Activated T-helper 1 cell treated with anti-CD3 and anti-CD28 coated beads, Interleukin-12 subunit alpha, Interleukin-12 subunit beta, Interleukin-2, Interleukin-4 antibody, amounts not matched to agents 30 ng/mL and 10 ng/mL and 1 ng/mL, durations not matched to agents 14 hours and 24 hours and 36 hours (primary cell): ENCODE measurements at regions of chr16 and their contacts with region 1.

Region 1: GRCh38 chr16:3400779-3401688 is at the starts of genes ZNF174 and ZSCAN32:
- DNase-seq: peak; percentile 99
- H3K4me3 Mint-ChIP-seq: peak within 1 kb of the TSS; percentile 96
- H3K27ac Mint-ChIP-seq: peak within 1 kb of the TSS; percentile 81
- H3K4me1 Mint-ChIP-seq: peaks cover 7% of the 10 kb centered on the region
- H3K27me3 Mint-ChIP-seq: no peaks in the 10 kb centered on the region
- total RNA-seq, gene ZNF174: 9.9 and 10.6 TPM in 2 replicates
- total RNA-seq, gene ZSCAN32: 14.3 and 19.4 TPM in 2 replicates

Region 2: DNA sequence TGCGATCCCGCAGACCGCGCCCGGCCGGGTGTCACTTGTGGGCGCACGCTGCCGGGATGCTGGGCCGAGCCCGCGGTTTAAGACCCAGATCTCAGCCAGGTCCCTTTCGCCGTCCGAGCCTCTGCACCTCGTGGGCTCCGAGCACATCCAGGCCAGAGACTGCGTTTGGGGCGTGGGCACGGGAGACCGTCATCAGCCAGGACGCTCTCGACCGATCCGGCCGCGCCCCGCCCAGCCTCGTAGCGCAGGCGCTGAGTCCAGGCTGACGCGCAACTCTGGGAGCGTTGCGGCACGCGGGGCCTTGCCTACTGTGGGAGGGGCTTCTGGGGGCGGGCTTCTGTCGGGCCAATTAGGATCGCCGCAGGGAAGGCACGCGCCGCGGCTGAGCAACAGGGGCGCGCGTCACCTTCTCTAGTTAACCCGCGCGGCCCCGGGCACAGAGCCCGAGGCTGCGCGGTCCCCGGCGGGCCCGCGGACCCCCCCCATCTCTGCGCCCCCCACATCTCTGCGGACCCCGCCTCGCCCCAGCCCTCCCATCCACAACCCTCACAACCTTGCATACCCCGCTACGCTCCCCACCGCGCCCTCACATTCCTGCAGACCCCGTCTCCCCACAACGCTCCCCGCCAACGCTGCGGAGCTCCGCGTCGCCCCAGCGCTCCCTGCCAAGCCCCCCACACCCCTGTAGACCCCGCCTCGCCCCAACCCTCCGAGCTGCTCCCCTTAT is 869.1 kb before region 1 on chr16:
- intact Hi-C with region 1: loop called (anchors 10 kb)
- DNase-seq: peak; percentile 97
- H3K4me3 Mint-ChIP-seq: peak overlapping the region; percentile 100
- H3K27ac Mint-ChIP-seq: peak overlapping the region; percentile 100
- H3K4me1 Mint-ChIP-seq: peaks cover 9% of the 10 kb centered on the region
- H3K27me3 Mint-ChIP-seq: no peaks in the 10 kb centered on the region

Region 3: DNA sequence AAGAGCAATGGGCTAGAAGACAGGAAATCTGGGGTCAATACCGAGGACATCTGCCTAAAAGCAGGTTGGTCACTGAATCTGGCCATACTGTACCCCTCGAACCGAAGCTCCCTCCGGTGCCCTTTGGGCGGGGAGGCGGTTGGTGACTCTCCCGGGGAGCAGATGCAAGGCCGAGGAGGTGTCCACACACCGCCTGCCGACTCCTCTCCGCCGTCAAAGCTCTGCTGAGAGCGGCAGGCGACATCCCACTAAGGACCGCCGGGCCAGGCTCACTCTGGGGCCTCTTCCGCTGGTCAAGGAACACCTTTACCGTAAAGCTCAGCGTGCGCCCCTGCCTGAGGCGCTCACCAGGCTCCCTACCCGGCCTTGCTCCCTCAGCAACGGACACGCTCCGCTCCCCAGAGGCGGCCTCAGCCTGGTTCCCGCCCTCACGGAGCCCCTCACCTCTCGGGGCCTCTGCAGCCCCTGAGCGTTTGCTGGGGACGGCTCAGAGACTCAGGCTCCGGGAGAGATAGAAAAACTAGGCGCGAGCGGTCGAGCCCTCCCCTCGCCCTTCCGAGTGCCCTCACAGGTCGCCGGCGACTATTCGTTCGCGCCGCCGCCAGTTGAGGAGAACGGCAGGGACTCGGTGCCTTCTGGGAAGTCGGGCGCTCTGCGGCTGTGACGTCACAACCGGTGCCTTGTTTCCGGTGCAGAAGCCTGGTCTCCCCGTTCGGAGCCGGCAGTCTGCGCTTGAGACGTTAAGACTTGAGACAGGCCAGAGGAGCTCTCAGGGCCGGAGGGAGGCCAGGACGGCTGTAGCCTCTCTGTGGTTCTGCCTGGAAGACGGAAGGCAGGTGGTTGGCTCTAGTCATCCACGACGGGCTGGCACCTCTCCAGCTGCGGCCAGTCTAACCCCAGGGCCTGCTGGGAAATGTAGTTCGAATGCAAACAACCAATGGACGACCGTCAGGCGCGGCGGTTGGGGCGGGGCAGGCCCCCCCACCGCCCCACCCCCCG is 166.2 kb before region 1 on chr16 and contains the start of gene ZNF200:
- intact Hi-C with region 1: loop called (anchors 1 kb)
- DNase-seq: peak; percentile 91
- H3K4me3 Mint-ChIP-seq: peak within 1 kb of the TSS; percentile 94
- H3K27ac Mint-ChIP-seq: peak within 1 kb of the TSS; percentile 94
- H3K4me1 Mint-ChIP-seq: peaks cover 15% of the 10 kb centered on the region
- H3K27me3 Mint-ChIP-seq: no peaks in the 10 kb centered on the region
- total RNA-seq, gene ZNF200: 13.6 and 15.8 TPM in 2 replicates

Region 4: DNA sequence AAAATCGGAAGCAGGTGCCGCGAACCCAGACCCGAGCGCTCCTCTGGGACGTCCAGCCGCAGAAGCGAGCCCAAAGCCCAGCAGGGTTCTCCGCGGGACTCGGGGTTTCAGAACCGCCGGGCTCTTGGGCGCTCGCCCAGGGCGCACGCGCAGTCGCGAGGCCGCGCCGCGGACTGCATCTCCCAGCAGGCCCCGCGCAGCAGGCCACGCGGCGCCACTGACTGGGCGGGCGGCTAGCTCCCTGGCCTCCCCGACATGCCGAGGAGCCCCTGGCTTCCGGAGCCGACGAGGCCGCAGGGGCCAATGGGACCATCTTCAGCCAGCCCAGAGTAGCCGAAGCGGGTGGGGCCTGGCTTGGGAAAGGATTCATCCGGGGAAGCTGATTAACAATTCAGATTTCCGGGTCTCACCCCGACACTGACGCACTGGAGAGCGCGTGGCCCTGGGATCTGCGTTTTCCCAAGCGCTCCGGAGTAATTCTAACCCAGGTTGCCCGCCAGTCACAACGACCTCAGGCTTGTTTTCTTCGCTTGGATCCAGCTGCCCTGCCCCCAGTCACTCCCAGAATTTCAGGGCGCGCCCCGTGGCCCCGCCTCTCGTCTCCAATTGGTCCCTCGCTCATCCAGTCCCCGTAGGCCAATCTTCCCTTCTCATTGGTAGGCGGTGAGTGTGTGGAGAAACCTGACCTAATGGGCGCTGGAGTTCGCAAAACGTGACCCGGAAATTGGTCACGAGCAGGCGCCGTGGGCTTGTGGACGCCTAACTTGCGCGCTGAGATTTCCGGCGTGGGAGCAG is 118.1 kb before region 1 on chr16 and contains the start of gene ZNF263:
- intact Hi-C with region 1: loop called (anchors 1 kb)
- DNase-seq: peak; percentile 90
- H3K4me3 Mint-ChIP-seq: peak within 1 kb of the TSS; percentile 96
- H3K27ac Mint-ChIP-seq: peak within 1 kb of the TSS; percentile 97
- H3K4me1 Mint-ChIP-seq: peaks cover 23% of the 10 kb centered on the region
- H3K27me3 Mint-ChIP-seq: no peaks in the 10 kb centered on the region
- total RNA-seq, gene ZNF263: 25.5 and 27.8 TPM in 2 replicates

Region 5: GRCh38 chr16:3364774-3365427 is 36.1 kb before region 1 on chr16:
- intact Hi-C with region 1: loop called (anchors 2 kb)
- DNase-seq: peak; percentile 63
- H3K4me3 Mint-ChIP-seq: peak overlapping the region; percentile 68
- H3K27ac Mint-ChIP-seq: peak overlapping the region; percentile 53
- H3K4me1 Mint-ChIP-seq: no peaks in the 10 kb centered on the region
- H3K27me3 Mint-ChIP-seq: peaks cover 2% of the 10 kb centered on the region

Region 6: DNA sequence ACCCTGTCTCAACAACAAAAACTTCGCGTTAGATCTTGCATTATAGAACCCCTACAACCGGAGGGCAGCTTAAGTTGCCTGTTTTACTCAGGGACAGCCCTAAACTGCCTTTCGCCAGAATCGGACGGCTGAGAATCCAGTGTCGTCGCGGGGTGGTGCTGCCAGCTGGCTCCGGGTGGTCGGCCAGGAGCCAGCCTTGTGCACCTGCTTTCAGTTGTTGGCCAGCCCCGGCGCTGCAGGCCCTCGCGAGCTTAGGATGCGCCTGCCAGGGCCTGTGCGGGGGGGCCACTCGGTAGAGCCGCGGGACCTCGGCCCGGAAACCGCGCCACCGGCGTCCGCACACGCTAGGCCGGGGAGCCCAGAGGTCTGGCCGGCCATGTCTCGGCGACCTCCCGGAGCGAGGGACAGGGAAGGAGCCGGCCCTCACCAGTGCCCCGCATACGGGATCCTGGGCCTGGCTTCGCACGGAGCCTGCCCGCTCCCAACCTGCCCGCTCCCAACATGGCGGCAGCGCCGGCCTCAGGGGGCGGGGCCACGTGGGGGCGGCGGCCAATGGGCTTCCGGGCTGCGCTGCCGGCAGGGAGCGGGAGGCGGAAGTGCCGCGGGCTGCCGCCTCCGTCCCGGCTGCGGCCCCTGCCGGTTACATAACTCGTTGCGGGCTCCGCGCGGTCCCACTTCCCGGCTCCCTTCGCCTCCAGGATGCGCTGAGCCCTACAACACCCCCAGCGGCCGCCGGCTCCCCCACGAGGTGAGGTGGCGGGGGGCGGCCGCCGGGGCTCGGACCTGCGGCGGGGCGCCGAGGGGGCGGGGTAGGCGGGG is 56.6 kb after region 1 on chr16:
- intact Hi-C with region 1: loop called (anchors 1 kb)
- DNase-seq: peak; percentile 88
- H3K4me3 Mint-ChIP-seq: peak overlapping the region; percentile 83
- H3K27ac Mint-ChIP-seq: peak overlapping the region; percentile 77
- H3K4me1 Mint-ChIP-seq: peaks cover 42% of the 10 kb centered on the region
- H3K27me3 Mint-ChIP-seq: no peaks in the 10 kb centered on the region